ENCODE measurements at regions of chr20 and their contacts with region 1.

Region 1: GRCh38 chr20:48904365-48905296 is 16.9 kb upstream of the ARFGEF2 start:
- DNase-seq: peak; percentile 18 to 79 (median 57)
- ATAC-seq: peak; percentile 48 to 64 (median 58)
- H3K4me3 ChIP-seq: no peak overlapping the region
- H3K4me3 Mint-ChIP-seq: no peak overlapping the region
- H3K27ac ChIP-seq: no peak overlapping the region
- H3K27ac Mint-ChIP-seq: peak overlapping the region in 1 of 2 donors; percentile 52
- H3K4me1 ChIP-seq: peaks cover 0 to 7% of the 10 kb centered on the region in 2 experiments
- H3K4me1 Mint-ChIP-seq: peaks cover 7 to 15% (median 9%) of the 10 kb centered on the region in 3 donors
- H3K27me3 ChIP-seq: no peaks in the 10 kb centered on the region
- H3K27me3 Mint-ChIP-seq: peaks cover 0 to 4% of the 10 kb centered on the region in 2 donors

Region 2: DNA sequence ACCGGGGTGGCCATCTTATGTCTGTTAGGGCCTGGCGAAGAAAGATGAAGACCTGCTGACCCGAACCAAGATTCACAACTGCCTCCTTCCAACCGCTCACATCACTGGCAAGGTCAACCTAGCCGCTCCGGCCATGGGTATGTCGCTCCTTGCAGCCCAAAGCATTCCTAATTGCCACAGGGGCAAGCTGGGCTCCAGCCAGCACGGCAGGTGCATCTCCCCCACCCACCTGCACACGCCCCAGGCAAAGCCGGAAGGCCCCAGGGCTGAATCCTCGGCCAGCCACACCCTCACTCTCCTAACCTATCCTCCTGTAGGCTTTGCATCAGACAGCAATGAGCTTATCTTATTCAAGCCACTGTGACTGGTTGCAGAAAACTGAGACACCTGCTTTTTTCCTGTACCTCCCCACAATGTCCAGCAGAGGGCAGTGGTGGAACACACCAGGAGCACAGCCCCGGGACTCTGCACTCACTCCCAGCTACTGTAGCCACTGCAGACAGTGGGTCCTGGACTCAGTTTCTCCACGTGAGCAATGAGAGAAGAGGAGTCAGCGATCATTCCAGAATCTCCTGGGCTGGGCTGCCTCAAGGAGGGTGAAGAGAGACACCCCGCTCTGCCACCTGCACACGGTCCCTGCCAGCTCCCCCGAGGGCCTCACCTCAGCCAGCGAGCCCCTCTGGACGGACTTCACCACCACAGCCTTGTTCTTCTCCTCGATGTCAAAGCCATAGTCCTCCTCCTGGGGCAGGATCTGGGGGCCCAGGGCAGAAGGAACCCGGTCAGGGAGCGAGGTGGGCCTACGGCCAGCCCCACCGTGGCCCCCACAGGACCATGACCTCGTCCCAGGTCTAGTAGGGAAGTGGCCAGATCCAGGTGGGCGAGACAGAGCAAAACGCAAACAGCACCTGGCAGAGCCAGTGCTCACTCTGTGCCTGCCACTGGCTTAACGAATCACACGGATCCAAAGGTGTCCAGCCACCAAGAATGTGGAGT is 246.9 kb before region 1 on chr20:
- CTCF ChIA-PET with region 1: interaction called, 23 to 79 read pairs
- POLR2A ChIA-PET with region 1: no interaction called
- DNase-seq: peak; percentile 24 to 87 (median 55)
- ATAC-seq: peak; percentile 76 to 82 (median 78)
- H3K4me3 ChIP-seq: no peak overlapping the region
- H3K4me3 Mint-ChIP-seq: no peak overlapping the region
- H3K27ac ChIP-seq: no peak overlapping the region
- H3K27ac Mint-ChIP-seq: peak overlapping the region in 1 of 2 donors; percentile 15
- H3K4me1 ChIP-seq: peaks cover 0 to 7% of the 10 kb centered on the region in 2 experiments
- H3K4me1 Mint-ChIP-seq: peaks cover 3 to 19% (median 6%) of the 10 kb centered on the region in 3 donors
- H3K27me3 ChIP-seq: no peaks in the 10 kb centered on the region
- H3K27me3 Mint-ChIP-seq: no peaks in the 10 kb centered on the region

Region 3: DNA sequence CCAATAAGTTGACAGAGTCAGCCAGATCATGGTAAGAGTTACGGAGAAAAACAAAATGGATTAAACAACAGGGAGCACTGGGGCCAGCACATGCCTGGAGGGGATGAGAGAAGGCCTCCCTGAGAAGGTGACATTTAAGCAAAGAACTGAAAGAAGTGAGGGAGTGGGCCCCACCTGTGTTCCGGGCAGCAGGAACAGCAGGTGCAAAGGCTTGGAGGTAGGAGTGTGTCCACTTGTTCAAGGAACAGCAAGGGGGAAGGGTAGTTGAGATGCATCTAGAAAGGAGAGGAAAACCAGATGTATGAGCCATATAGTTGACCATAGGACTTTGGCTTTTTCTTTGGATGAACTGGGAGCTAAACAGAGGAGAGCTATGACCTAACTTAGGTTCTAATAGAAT is 69.2 kb before region 1 on chr20:
- CTCF ChIA-PET with region 1: no interaction called
- POLR2A ChIA-PET with region 1: no interaction called
- DNase-seq: no peak
- ATAC-seq: no peak
- H3K4me3 ChIP-seq: no peak overlapping the region
- H3K4me3 Mint-ChIP-seq: no peak overlapping the region
- H3K27ac ChIP-seq: no peak overlapping the region
- H3K27ac Mint-ChIP-seq: no peak overlapping the region
- H3K4me1 ChIP-seq: no peaks in the 10 kb centered on the region
- H3K4me1 Mint-ChIP-seq: peaks cover 0 to 9% (median 4%) of the 10 kb centered on the region in 3 donors
- H3K27me3 ChIP-seq: peaks cover 0 to 2% of the 10 kb centered on the region in 2 experiments
- H3K27me3 Mint-ChIP-seq: peaks cover 0 to 3% of the 10 kb centered on the region in 2 donors

Region 4: GRCh38 chr20:48875911-48876640 is 28.6 kb before region 1 on chr20:
- CTCF ChIA-PET with region 1: interaction called in 1 of 2 experiments, 12 read pairs
- POLR2A ChIA-PET with region 1: no interaction called
- DNase-seq: no peak
- ATAC-seq: no peak
- H3K4me3 ChIP-seq: no peak overlapping the region
- H3K4me3 Mint-ChIP-seq: no peak overlapping the region
- H3K27ac ChIP-seq: no peak overlapping the region
- H3K27ac Mint-ChIP-seq: no peak overlapping the region
- H3K4me1 ChIP-seq: peaks cover 0 to 8% of the 10 kb centered on the region in 2 experiments
- H3K4me1 Mint-ChIP-seq: peaks cover 9 to 13% (median 12%) of the 10 kb centered on the region in 3 donors
- H3K27me3 ChIP-seq: no peaks in the 10 kb centered on the region
- H3K27me3 Mint-ChIP-seq: no peaks in the 10 kb centered on the region

Region 5: GRCh38 chr20:48919641-48920526 is 15.3 kb after region 1 on chr20:
- CTCF ChIA-PET with region 1: interaction called, 3 to 10 read pairs
- POLR2A ChIA-PET with region 1: interaction called in 1 of 2 experiments, 4 read pairs
- DNase-seq: peak in 1 of 35 experiments; percentile 16
- ATAC-seq: no peak
- H3K4me3 ChIP-seq: no peak overlapping the region
- H3K4me3 Mint-ChIP-seq: peak overlapping the region; percentile 89 to 98 (median 92)
- H3K27ac ChIP-seq: peak overlapping the region; percentile 91
- H3K27ac Mint-ChIP-seq: peak overlapping the region; percentile 81 to 94
- H3K4me1 ChIP-seq: peaks cover 5 to 24% of the 10 kb centered on the region in 2 experiments
- H3K4me1 Mint-ChIP-seq: peaks cover 38 to 43% (median 41%) of the 10 kb centered on the region in 3 donors
- H3K27me3 ChIP-seq: no peaks in the 10 kb centered on the region
- H3K27me3 Mint-ChIP-seq: no peaks in the 10 kb centered on the region

Region 6: DNA sequence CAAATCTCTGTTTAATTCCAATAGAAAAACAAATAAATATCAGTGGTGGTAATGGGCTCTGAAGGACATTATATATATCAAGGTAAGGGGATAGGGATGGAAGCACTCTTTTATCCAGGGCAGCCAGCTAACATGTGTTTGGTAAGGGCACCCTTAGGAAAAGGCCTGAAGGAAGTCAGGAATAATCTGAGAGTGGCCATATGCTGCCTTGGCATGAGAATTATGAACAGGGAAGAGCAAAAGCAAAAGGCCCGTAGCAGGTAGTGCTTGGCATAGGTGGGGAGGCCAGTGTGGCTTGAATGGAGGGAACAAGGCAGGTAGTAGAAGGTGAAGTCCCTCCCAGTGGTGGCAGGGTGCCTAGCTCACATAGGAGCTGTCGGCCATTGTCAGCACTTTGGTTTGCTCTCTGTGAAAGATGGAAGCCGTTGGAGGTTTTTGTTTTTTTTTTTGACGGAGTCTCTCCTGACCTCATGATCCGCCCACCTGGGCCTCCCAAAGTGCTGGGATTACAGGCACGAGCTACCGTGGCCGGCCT is 101.9 kb after region 1 on chr20:
- CTCF ChIA-PET with region 1: no interaction called
- POLR2A ChIA-PET with region 1: no interaction called
- DNase-seq: no peak
- ATAC-seq: no peak
- H3K4me3 ChIP-seq: no peak overlapping the region
- H3K4me3 Mint-ChIP-seq: no peak overlapping the region
- H3K27ac ChIP-seq: no peak overlapping the region
- H3K27ac Mint-ChIP-seq: no peak overlapping the region
- H3K4me1 ChIP-seq: no peaks in the 10 kb centered on the region
- H3K4me1 Mint-ChIP-seq: no peaks in the 10 kb centered on the region
- H3K27me3 ChIP-seq: no peaks in the 10 kb centered on the region
- H3K27me3 Mint-ChIP-seq: no peaks in the 10 kb centered on the region